Activated T-helper 2 cell treated with anti-CD3 and anti-CD28 coated beads, Interferon-gamma antibody, Interleukin-2, Interleukin-4, amounts not matched to agents 10 μg/mL and 5 μg/mL and 100 μg/mL, durations not matched to agents 14 hours and 24 hours and 36 hours (primary cell): ENCODE measurements at regions of chr1 and their contacts with region 1.

Region 1: GRCh38 chr1:235999259-235999925 is 65.5 kb downstream of the NID1 start:
- DNase-seq: peak; percentile 75
- H3K4me3 Mint-ChIP-seq: peak overlapping the region; percentile 54
- H3K27ac Mint-ChIP-seq: peak overlapping the region; percentile 96
- H3K4me1 Mint-ChIP-seq: peaks cover 50% of the 10 kb centered on the region
- H3K27me3 Mint-ChIP-seq: no peaks in the 10 kb centered on the region

Region 2: DNA sequence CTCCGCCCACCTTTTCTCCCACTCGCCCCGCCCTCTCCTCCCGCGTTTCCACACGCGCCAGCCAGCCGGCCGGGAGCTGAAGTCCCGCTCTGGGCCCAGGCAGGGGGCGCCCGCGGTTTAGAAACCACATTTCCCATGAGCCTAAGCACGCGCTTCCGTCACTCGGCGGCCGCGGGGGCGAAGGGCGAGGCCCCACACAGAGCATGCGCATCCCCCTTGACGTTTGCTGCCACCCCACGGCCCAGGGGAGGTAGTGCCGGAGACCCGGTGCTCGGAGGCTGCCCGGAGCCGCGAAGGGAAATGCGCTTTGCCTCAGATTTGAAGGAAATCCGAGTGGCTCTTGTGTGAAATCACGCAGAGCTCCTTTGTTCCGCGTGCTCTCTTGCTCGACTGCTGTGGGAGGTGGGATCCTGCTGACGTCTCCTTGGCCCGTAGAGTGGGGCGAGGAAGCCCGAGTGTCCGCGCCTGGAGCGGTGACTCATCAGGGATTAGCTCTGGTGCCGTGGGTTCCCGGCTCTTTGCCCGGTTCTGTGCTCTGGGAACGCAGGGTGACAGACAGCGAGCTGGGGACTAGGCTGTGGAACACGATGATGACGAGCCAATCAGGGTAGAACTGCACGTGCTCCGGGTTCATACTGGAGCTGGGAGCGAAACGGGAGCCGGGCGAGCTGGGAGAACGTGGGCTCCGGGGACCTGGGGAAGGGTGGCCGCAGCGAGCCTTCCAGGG is 494.7 kb before region 1 on chr1:
- intact Hi-C with region 1: loop called (anchors 1 kb)
- DNase-seq: peak; percentile 98
- H3K4me3 Mint-ChIP-seq: peak overlapping the region; percentile 94
- H3K27ac Mint-ChIP-seq: peak overlapping the region; percentile 92
- H3K4me1 Mint-ChIP-seq: peaks cover 32% of the 10 kb centered on the region
- H3K27me3 Mint-ChIP-seq: peaks cover 6% of the 10 kb centered on the region

Region 3: DNA sequence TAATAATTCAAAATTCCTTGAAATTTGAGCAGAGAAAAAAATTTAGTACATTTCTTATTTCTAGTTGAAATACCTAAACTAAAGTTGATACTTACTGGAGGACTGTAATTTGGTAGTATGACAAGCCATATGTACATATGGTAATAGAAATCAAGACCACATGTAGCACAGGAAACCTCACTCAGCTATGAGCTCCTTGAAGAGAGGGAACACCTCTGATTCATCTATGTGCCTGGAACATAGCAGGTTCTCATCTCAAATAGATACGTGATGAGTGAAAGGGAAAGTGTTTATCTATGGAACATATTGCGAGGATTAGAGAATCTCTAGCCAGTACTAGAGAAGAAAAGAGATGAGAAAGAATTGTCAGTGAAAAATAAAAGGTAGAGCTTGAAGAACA is 301.9 kb before region 1 on chr1:
- intact Hi-C with region 1: loop called (anchors 1 kb)
- DNase-seq: no peak
- H3K4me3 Mint-ChIP-seq: no peak overlapping the region
- H3K27ac Mint-ChIP-seq: peak overlapping the region; percentile 80
- H3K4me1 Mint-ChIP-seq: peaks cover 16% of the 10 kb centered on the region
- H3K27me3 Mint-ChIP-seq: no peaks in the 10 kb centered on the region

Region 4: GRCh38 chr1:235883261-235883927 is 116.0 kb before region 1 on chr1:
- intact Hi-C with region 1: loop called (anchors 1 kb)
- DNase-seq: no peak
- H3K4me3 Mint-ChIP-seq: peak overlapping the region; percentile 63
- H3K27ac Mint-ChIP-seq: peak overlapping the region; percentile 67
- H3K4me1 Mint-ChIP-seq: peaks cover 46% of the 10 kb centered on the region
- H3K27me3 Mint-ChIP-seq: no peaks in the 10 kb centered on the region

Region 5: DNA sequence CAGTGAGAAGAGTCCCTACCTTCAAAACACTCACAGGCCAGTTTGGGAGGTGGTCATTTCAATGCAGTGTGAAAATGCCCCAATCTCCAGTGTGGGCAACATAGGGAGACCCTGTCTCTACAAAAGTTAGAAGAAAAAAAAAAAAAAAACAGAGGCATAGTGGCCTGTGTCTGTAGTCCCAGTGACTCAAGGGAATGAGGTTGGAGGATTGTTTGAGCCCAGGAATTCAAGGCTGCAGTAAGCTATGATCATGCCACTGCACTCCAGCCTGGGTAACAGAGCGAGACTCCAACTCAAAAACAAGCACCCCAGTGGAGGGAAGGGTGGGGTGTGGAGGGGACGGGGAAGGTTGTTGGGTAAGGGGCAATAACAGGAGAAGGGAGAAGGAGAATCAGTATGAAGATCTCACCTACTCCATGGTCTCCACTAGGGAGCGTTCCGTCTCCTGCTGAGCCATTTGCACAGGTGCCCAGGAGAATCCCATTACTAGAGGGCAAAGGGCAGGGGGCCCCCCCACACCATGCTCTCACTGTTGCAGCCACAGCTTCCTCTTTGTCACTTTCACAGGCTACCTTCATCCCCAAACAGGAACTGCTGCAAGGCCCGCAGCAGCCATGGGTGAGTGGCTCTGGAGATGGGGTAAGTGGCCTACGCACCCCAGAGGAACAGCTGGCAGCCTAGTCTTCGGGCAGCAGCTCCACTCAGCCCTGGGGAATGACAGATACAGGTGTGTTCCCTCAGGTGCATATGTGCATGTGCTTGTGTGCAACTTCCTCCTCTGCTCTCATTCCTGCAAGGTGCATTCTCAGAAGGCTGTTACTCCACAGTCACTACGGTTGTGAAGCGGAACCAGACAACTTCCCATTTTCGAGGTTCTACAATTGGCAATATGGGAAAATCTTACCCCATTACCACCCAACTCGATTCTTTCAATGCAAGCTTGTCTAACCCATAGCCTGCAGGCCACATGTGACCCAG is 44.8 kb before region 1 on chr1:
- intact Hi-C with region 1: loop called (anchors 1 kb)
- DNase-seq: peak; percentile 15
- H3K4me3 Mint-ChIP-seq: no peak overlapping the region
- H3K27ac Mint-ChIP-seq: no peak overlapping the region
- H3K4me1 Mint-ChIP-seq: peaks cover 33% of the 10 kb centered on the region
- H3K27me3 Mint-ChIP-seq: no peaks in the 10 kb centered on the region

Region 6: DNA sequence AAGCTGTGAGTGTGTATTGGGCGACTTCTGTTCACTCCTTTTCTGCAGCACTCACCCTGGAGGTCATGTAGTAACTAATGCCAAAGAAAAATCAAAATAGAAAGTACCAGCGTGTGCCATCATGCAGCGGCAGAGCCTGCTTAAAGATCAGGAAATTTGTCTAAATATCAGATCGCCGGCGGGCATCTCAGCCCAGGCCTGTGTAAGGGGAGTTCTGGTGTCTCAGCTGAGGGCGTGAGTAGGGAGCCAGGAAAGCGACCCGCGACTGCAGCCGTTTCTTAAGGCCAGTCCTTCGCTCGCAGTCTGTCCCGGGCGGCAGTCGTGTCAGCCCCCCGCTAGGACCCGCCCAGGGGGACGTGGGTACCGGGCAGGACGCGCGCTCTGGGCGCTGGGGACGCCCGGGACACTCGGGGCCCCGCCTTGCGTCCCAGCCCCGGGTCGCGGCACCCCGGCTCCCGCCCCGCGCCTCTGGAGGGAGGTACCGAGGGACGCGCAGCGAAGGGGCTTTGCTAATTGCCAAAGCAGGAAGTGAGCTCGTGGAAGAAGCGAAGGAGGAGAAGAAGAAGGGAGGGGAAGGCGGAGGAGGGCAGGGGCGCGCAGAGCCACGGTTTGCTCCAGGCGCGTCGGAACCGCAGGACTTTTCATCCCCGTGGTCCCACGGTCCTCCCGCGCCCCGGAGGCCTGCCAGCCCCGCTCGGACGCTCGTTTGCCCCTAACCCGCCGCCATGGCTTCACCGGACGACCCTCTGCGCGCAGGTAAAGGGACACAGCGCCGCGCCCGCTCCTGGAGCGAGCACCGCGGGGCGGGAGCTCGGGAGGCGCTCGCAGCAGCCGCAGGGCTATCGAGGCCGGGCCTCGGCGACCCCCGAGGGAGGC is 395.8 kb after region 1 on chr1:
- intact Hi-C with region 1: loop called (anchors 1 kb)
- DNase-seq: peak; percentile 64
- H3K4me3 Mint-ChIP-seq: peak overlapping the region; percentile 84
- H3K27ac Mint-ChIP-seq: peak overlapping the region; percentile 79
- H3K4me1 Mint-ChIP-seq: peaks cover 57% of the 10 kb centered on the region
- H3K27me3 Mint-ChIP-seq: peaks cover 11% of the 10 kb centered on the region